Thyroid gland (tissue), 4 donors: ENCODE measurements at regions of chr15 and their contacts with region 1.

Region 1: DNA sequence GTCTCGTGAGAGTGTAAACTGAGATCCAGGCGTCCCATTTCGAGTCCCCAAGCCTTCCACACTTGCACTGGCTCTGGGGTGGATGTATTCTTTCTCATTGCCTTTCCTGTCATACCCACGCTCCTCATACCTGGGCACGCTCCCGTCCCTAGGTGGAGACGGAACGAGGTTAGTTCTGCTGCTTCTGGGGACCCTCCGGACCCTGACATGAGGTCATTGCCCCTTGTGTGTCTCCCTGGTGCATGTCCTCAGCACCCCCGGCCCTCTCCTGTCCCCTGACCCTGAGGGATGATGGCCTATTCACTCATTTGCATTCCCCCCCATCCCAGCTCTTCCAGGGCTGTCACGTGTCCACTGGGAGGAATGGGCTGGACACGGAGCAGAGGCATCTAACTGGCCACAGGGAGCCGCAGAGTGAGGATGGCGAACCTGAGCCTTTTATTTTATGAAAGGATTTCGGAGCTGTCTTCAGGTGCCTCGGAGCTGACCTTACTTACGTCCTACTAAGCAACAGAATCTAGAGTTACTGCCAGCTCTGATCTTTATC is 8.2 kb downstream of the NIPA1 start:
- DNase-seq: no peak
- H3K4me3 ChIP-seq: no peak overlapping the region
- H3K27ac ChIP-seq: no peak overlapping the region
- H3K4me1 ChIP-seq: peaks cover 0 to 4% of the 10 kb centered on the region in 2 donors
- H3K27me3 ChIP-seq: no peaks in the 10 kb centered on the region
- CTCF ChIP-seq: no peak
- POLR2A ChIP-seq: no peak

Region 2: GRCh38 chr15:22827125-22827524 is 32.4 kb after region 1 on chr15:
- intact Hi-C with region 1: loop called (anchors 5 kb)
- DNase-seq: no peak
- H3K4me3 ChIP-seq: no peak overlapping the region
- H3K27ac ChIP-seq: no peak overlapping the region
- H3K4me1 ChIP-seq: no peaks in the 10 kb centered on the region
- H3K27me3 ChIP-seq: no peaks in the 10 kb centered on the region
- CTCF ChIP-seq: no peak
- POLR2A ChIP-seq: no peak

Region 3: GRCh38 chr15:22872936-22873701 is 78.4 kb after region 1 on chr15:
- intact Hi-C with region 1: no loop called
- DNase-seq: peak; percentile 44 to 48
- H3K4me3 ChIP-seq: no peak overlapping the region
- H3K27ac ChIP-seq: no peak overlapping the region
- H3K4me1 ChIP-seq: no peaks in the 10 kb centered on the region
- H3K27me3 ChIP-seq: no peaks in the 10 kb centered on the region
- CTCF ChIP-seq: no peak
- POLR2A ChIP-seq: no peak

Region 4: DNA sequence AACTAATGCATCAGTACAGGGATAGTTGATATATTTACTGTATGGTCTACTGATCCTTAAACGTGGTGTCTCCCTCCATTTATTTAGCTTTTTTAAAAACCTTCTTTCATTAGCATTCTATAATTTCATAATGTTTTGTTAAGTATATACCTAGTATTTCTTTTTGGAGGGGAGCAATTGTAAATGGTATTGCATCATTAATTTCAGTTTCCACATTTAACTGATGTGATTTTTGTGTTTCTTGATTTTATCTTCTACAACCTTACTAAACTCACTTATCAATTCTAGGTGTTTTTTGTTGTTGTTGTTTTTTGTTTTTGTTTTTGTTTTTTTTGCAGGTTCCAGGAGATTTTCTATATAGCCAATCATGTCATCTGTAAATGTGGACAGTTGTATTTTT is 323.5 kb after region 1 on chr15:
- intact Hi-C with region 1: no loop called
- DNase-seq: no peak
- H3K4me3 ChIP-seq: no peak overlapping the region
- H3K27ac ChIP-seq: no peak overlapping the region
- H3K4me1 ChIP-seq: no peaks in the 10 kb centered on the region
- H3K27me3 ChIP-seq: no peaks in the 10 kb centered on the region
- CTCF ChIP-seq: no peak
- POLR2A ChIP-seq: no peak